IMR-90 (cell line): ENCODE measurements at regions of chr19 and their contacts with region 1.

Region 1: GRCh38 chr19:58558623-58559274 is 338 bp upstream of the UBE2M start:
- DNase-seq: peak; percentile 98
- ATAC-seq: peak; percentile 69
- H3K4me3 ChIP-seq: peak overlapping the region; percentile 81
- H3K27ac ChIP-seq: peak overlapping the region; percentile 100
- H3K4me1 ChIP-seq: peaks cover 31% of the 10 kb centered on the region
- H3K27me3 ChIP-seq: no peaks in the 10 kb centered on the region
- CTCF ChIP-seq: no peak
- POLR2A ChIP-seq: peak; percentile 85
- RAD21 ChIP-seq: no peak

Region 2: GRCh38 chr19:58475714-58476497 is 82.8 kb before region 1 on chr19 and contains the start of gene ZNF446:
- CTCF ChIA-PET with region 1: no interaction called
- POLR2A ChIA-PET with region 1: no interaction called
- dilution Hi-C with region 1: no loop called
- in situ Hi-C with region 1: no loop called
- intact Hi-C with region 1: no loop called
- DNase-seq: peak; percentile 94
- ATAC-seq: peak; percentile 90
- H3K4me3 ChIP-seq: peak within 1 kb of the TSS; percentile 57
- H3K27ac ChIP-seq: peak within 1 kb of the TSS; percentile 88
- H3K4me1 ChIP-seq: peaks cover 19% of the 10 kb centered on the region
- H3K27me3 ChIP-seq: no peaks in the 10 kb centered on the region
- CTCF ChIP-seq: no peak
- POLR2A ChIP-seq: peak; percentile 63
- RAD21 ChIP-seq: no peak
- total RNA-seq, gene ZNF446: 3.9 and 4.8 TPM in 2 replicates

Region 3: GRCh38 chr19:58543826-58544590 is 14.7 kb before region 1 on chr19 and contains the start of gene TRIM28:
- CTCF ChIA-PET with region 1: no interaction called
- POLR2A ChIA-PET with region 1: interaction called, 3 read pairs
- dilution Hi-C with region 1: no loop called
- in situ Hi-C with region 1: no loop called
- intact Hi-C with region 1: loop called (anchors 2 kb)
- DNase-seq: peak; percentile 99
- ATAC-seq: peak; percentile 91
- H3K4me3 ChIP-seq: peak within 1 kb of the TSS; percentile 77
- H3K27ac ChIP-seq: peak within 1 kb of the TSS; percentile 88
- H3K4me1 ChIP-seq: peaks cover 13% of the 10 kb centered on the region
- H3K27me3 ChIP-seq: peaks cover 7% of the 10 kb centered on the region
- CTCF ChIP-seq: no peak
- POLR2A ChIP-seq: peak; percentile 97
- RAD21 ChIP-seq: no peak
- total RNA-seq, gene TRIM28: 313 and 349 TPM in 2 replicates